ENCODE measurements at regions of chr17 and their contacts with region 1.

Region 1: GRCh38 chr17:4249452-4250029 is 14.2 kb downstream of the ANKFY1 start:
- DNase-seq: no peak
- H3K4me3 Mint-ChIP-seq: no peak overlapping the region
- H3K27ac Mint-ChIP-seq: no peak overlapping the region
- H3K4me1 Mint-ChIP-seq: peaks cover 25% of the 10 kb centered on the region
- H3K27me3 Mint-ChIP-seq: no peaks in the 10 kb centered on the region

Region 2: DNA sequence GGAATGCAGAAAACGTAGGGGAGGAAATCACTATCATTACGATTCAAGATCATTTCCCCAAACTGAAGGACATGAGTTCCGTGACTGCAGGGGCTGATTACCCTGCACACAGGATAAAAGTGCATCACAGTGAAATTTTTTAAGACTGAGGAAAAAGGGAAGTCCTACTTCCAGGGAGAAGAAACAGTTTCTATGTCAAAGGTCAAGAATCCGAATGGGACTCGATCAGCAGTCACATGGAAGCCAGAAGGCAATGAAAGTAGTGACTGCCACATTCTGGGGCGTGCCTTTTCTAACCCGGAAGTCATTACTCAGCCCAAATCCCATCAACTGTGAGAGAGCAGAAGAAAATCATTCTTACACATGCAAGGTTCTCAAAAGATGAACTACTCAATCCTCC is 118.8 kb before region 1 on chr17:
- CTCF ChIA-PET with region 1: no interaction called
- DNase-seq: no peak
- H3K4me3 Mint-ChIP-seq: no peak overlapping the region
- H3K27ac Mint-ChIP-seq: no peak overlapping the region
- H3K4me1 Mint-ChIP-seq: peaks cover 12% of the 10 kb centered on the region
- H3K27me3 Mint-ChIP-seq: no peaks in the 10 kb centered on the region

Region 3: GRCh38 chr17:4261452-4261851 is 11.9 kb after region 1 on chr17:
- CTCF ChIA-PET with region 1: interaction called, 19 read pairs
- DNase-seq: no peak
- H3K4me3 Mint-ChIP-seq: no peak overlapping the region
- H3K27ac Mint-ChIP-seq: peak overlapping the region; percentile 68
- H3K4me1 Mint-ChIP-seq: peaks cover 40% of the 10 kb centered on the region
- H3K27me3 Mint-ChIP-seq: no peaks in the 10 kb centered on the region

Measured in activated naive CD4-positive, alpha-beta T cell treated with anti-CD3 and anti-CD28 coated beads, Interleukin-2, amount 10 ng/mL, durations not matched to agents 7 days and 5 days (primary cell).